ENCODE measurements at regions of chr12 and their contacts with region 1.

Region 1: GRCh38 chr12:4526923-4527546 is 11.7 kb upstream of the RAD51AP1 start:
- DNase-seq: peak in 4 of 5 donors; percentile 26 to 35 (median 32)
- H3K4me3 ChIP-seq: no peak overlapping the region
- H3K4me3 Mint-ChIP-seq: no peak overlapping the region
- H3K27ac ChIP-seq: no peak overlapping the region
- H3K27ac Mint-ChIP-seq: no peak overlapping the region
- H3K4me1 ChIP-seq: peaks cover 20% of the 10 kb centered on the region
- H3K4me1 Mint-ChIP-seq: peaks cover 0 to 9% (median 4%) of the 10 kb centered on the region in 4 donors
- H3K27me3 ChIP-seq: no peaks in the 10 kb centered on the region
- H3K27me3 Mint-ChIP-seq: no peaks in the 10 kb centered on the region

Region 2: DNA sequence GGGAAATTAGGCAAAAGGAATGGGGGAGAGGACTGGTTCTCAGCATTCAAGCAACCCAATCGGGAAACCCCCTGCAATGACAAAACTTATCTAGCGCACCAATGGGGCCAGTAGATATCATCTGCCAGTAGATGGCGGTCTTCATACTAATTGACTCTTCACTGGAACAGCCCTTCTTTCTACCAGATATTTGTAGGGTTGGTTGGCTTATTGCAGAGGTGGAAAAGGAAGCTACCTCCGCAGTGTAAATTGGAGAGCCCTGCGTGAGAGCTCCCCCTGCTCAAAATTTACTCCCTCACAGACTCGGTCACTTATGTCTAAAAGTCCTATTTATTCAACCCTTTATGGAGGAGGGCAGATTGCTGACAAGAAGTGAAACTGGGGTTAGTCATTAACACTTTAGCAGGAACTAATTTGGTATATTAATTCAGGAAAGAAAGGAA is 419.6 kb before region 1 on chr12:
- CTCF ChIA-PET with region 1: no interaction called
- POLR2A ChIA-PET with region 1: no interaction called
- intact Hi-C with region 1: loop called (anchors 2 kb)
- DNase-seq: peak; percentile 78 to 87 (median 83)
- H3K4me3 ChIP-seq: no peak overlapping the region
- H3K4me3 Mint-ChIP-seq: peak overlapping the region in 7 of 8 donors; percentile 26 to 67 (median 47)
- H3K27ac ChIP-seq: no peak overlapping the region
- H3K27ac Mint-ChIP-seq: peak overlapping the region in 6 of 7 donors; percentile 80 to 94 (median 92)
- H3K4me1 ChIP-seq: peaks cover 10% of the 10 kb centered on the region
- H3K4me1 Mint-ChIP-seq: peaks cover 8 to 15% (median 11%) of the 10 kb centered on the region in 4 donors
- H3K27me3 ChIP-seq: no peaks in the 10 kb centered on the region
- H3K27me3 Mint-ChIP-seq: peaks cover 0 to 2% of the 10 kb centered on the region in 2 donors

Region 3: GRCh38 chr12:4421590-4422031 is 105.4 kb before region 1 on chr12:
- CTCF ChIA-PET with region 1: interaction called, 86 read pairs
- POLR2A ChIA-PET with region 1: no interaction called
- intact Hi-C with region 1: loop called (anchors 1 kb)
- DNase-seq: peak in 4 of 5 donors; percentile 42 to 57 (median 46)
- H3K4me3 ChIP-seq: no peak overlapping the region
- H3K4me3 Mint-ChIP-seq: no peak overlapping the region
- H3K27ac ChIP-seq: no peak overlapping the region
- H3K27ac Mint-ChIP-seq: peak overlapping the region in 1 of 7 donors; percentile 38
- H3K4me1 ChIP-seq: no peaks in the 10 kb centered on the region
- H3K4me1 Mint-ChIP-seq: peaks cover 0 to 1% (median 0%) of the 10 kb centered on the region in 4 donors
- H3K27me3 ChIP-seq: no peaks in the 10 kb centered on the region
- H3K27me3 Mint-ChIP-seq: peaks cover 5 to 6% of the 10 kb centered on the region in 2 donors

Region 4: GRCh38 chr12:4477129-4477528 is 49.9 kb before region 1 on chr12:
- CTCF ChIA-PET with region 1: no interaction called
- POLR2A ChIA-PET with region 1: no interaction called
- intact Hi-C with region 1: no loop called
- DNase-seq: no peak
- H3K4me3 ChIP-seq: no peak overlapping the region
- H3K4me3 Mint-ChIP-seq: no peak overlapping the region
- H3K27ac ChIP-seq: no peak overlapping the region
- H3K27ac Mint-ChIP-seq: no peak overlapping the region
- H3K4me1 ChIP-seq: no peaks in the 10 kb centered on the region
- H3K4me1 Mint-ChIP-seq: no peaks in the 10 kb centered on the region
- H3K27me3 ChIP-seq: no peaks in the 10 kb centered on the region
- H3K27me3 Mint-ChIP-seq: peaks cover 7 to 10% of the 10 kb centered on the region in 2 donors

Region 5: GRCh38 chr12:4506870-4507269 is 20.2 kb before region 1 on chr12:
- CTCF ChIA-PET with region 1: interaction called, 3 read pairs
- POLR2A ChIA-PET with region 1: interaction called, 4 read pairs
- intact Hi-C with region 1: loop called (anchors 2 kb)
- DNase-seq: peak; percentile 61 to 80 (median 70)
- H3K4me3 ChIP-seq: no peak overlapping the region
- H3K4me3 Mint-ChIP-seq: peak overlapping the region; percentile 43 to 83 (median 60)
- H3K27ac ChIP-seq: peak overlapping the region; percentile 44
- H3K27ac Mint-ChIP-seq: peak overlapping the region; percentile 51 to 94 (median 92)
- H3K4me1 ChIP-seq: peaks cover 23% of the 10 kb centered on the region
- H3K4me1 Mint-ChIP-seq: peaks cover 16 to 27% (median 22%) of the 10 kb centered on the region in 4 donors
- H3K27me3 ChIP-seq: no peaks in the 10 kb centered on the region
- H3K27me3 Mint-ChIP-seq: no peaks in the 10 kb centered on the region

Region 6: DNA sequence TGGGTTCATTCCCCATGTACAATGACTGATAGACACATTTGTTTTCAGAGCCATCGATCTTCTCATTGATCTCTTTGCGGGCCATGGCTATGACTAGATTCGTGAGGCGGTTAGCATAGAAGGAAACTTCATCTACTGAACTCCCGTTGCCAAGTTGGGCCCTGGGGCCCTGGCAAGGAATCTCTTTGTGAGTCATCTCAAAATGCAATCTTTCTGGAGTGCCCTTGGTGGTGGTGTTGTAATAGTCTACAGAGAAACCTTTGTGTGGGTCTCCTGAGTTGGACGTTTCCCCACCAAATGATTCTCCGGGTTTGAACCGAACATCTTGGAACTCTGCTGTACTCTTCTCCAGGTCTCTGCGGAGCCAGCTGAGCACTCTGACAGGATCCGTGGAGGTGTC is 101.4 kb after region 1 on chr12:
- CTCF ChIA-PET with region 1: no interaction called
- POLR2A ChIA-PET with region 1: no interaction called
- intact Hi-C with region 1: no loop called
- DNase-seq: no peak
- H3K4me3 ChIP-seq: no peak overlapping the region
- H3K4me3 Mint-ChIP-seq: no peak overlapping the region
- H3K27ac ChIP-seq: no peak overlapping the region
- H3K27ac Mint-ChIP-seq: no peak overlapping the region
- H3K4me1 ChIP-seq: no peaks in the 10 kb centered on the region
- H3K4me1 Mint-ChIP-seq: no peaks in the 10 kb centered on the region
- H3K27me3 ChIP-seq: no peaks in the 10 kb centered on the region
- H3K27me3 Mint-ChIP-seq: peaks cover under 1 to 8% of the 10 kb centered on the region in 2 donors

Measured in CD4-positive, alpha-beta memory T cell (primary cell).